Mammary epithelial cell (primary cell): ENCODE measurements at regions of chr1 and their contacts with region 1.

Region 1: GRCh38 chr1:109532365-109533136 is 7.1 kb upstream of the GPR61 start:
- DNase-seq: peak; percentile 37
- H3K4me3 ChIP-seq: peak overlapping the region in 1 of 3 experiments; percentile 28
- H3K27ac ChIP-seq: no peak overlapping the region
- H3K4me1 ChIP-seq: peaks cover 12% of the 10 kb centered on the region
- H3K27me3 ChIP-seq: no peaks in the 10 kb centered on the region
- CTCF ChIP-seq: peak; percentile 92 to 99

Region 2: GRCh38 chr1:108512239-108512981 is 1020.1 kb before region 1 on chr1:
- CTCF ChIA-PET with region 1: no interaction called
- dilution Hi-C with region 1: no loop called
- in situ Hi-C with region 1: no loop called
- intact Hi-C with region 1: loop called (anchors 10 kb)
- DNase-seq: no peak
- H3K4me3 ChIP-seq: no peak overlapping the region
- H3K27ac ChIP-seq: no peak overlapping the region
- H3K4me1 ChIP-seq: no peaks in the 10 kb centered on the region
- H3K27me3 ChIP-seq: no peaks in the 10 kb centered on the region
- CTCF ChIP-seq: peak; percentile 68 to 81

Region 3: DNA sequence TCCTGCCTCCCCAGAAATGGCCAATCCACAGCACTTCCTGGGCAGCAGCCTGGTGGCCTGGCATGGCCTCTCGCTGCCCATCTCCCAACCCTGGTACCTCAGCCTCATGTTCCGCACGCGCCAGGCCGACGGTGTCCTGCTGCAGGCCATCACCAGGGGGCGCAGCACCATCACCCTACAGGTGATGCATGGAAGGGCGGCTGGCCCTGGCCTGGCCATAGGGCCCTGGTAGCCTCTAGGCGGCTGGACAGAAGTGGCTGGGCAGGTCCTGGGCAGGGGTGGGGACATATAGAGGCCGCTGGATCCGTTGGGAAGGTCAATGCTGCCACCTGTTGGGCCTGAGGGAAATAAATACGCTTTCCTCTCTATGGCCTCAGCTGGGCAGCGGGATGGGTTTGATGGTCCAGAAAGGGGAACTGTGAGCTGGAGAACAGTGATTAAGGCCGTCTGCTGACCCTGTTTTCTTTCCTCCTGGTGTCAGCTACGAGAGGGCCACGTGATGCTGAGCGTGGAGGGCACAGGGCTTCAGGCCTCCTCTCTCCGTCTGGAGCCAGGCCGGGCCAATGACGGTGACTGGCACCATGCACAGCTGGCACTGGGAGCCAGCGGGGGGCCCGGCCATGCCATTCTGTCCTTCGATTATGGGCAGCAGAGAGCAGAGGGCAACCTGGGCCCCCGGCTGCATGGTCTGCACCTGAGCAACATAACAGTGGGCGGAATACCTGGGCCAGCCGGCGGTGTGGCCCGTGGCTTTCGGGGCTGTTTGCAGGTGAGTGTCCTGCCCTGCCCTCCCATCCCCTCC is 268.8 kb before region 1 on chr1:
- CTCF ChIA-PET with region 1: no interaction called
- dilution Hi-C with region 1: no loop called
- in situ Hi-C with region 1: no loop called
- intact Hi-C with region 1: loop called (anchors 1 kb)
- DNase-seq: no peak
- H3K4me3 ChIP-seq: no peak overlapping the region
- H3K27ac ChIP-seq: peak overlapping the region; percentile 40
- H3K4me1 ChIP-seq: peaks cover 32% of the 10 kb centered on the region
- H3K27me3 ChIP-seq: no peaks in the 10 kb centered on the region
- CTCF ChIP-seq: peak; percentile 100

Region 4: GRCh38 chr1:109397538-109398342 is 134.8 kb before region 1 on chr1 and contains the start of gene SORT1:
- CTCF ChIA-PET with region 1: no interaction called
- dilution Hi-C with region 1: no loop called
- in situ Hi-C with region 1: no loop called
- intact Hi-C with region 1: loop called (anchors 1 kb)
- DNase-seq: peak; percentile 77
- H3K4me3 ChIP-seq: peak within 1 kb of the TSS; percentile 54 to 73 (median 65)
- H3K27ac ChIP-seq: peak within 1 kb of the TSS; percentile 16
- H3K4me1 ChIP-seq: peaks cover 20% of the 10 kb centered on the region
- H3K27me3 ChIP-seq: no peaks in the 10 kb centered on the region
- CTCF ChIP-seq: no peak
- total RNA-seq, gene SORT1: 24.6 to 41.8 TPM

Region 5: DNA sequence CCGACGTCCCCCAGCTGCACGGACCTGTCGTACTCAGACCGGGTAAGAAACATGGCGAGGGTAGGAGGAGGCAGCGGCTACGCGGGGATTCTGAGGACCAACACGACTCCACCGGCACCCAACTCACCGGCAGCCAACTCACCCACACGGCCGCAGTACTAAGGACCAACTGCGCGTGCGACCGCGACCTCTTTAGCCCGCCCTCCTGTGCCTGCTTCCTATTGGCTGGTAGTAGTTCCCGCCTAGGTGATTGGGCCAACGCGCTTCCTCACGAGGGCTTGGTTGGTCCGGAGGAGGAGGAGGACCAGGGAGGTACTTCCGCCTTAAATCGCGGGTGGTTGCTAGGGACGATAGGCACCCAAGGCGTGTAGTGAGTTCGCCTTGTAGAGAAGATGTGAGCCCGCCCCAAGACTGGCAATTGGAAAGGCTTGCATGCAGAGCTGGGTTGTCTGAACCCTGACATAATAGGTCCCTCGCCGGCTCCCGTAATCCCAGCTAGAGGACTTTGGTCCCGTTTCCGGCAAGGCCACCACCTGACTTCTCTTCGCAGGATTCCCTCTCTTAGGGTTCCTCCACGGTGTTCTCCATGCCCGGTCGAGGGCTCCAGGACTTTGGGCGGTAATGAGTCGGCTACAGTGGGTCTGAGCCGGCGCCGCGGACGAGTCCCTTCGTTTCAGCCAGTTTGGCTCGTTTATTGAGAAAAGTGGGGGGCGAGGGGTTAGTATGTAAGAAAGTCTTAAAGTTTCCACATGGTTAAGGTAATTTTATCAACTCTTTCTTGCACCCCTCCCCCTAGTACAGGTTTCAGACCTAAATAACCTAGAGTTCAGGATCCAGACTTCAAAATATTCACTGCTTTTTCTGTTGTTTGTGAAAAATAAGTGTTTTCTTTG is 106.0 kb before region 1 on chr1 and contains the start of gene PSMA5:
- CTCF ChIA-PET with region 1: interaction called, 4 read pairs
- dilution Hi-C with region 1: no loop called
- in situ Hi-C with region 1: no loop called
- intact Hi-C with region 1: loop called (anchors 1 kb)
- DNase-seq: peak; percentile 100
- H3K4me3 ChIP-seq: peak within 1 kb of the TSS; percentile 77 to 98 (median 94)
- H3K27ac ChIP-seq: peak within 1 kb of the TSS; percentile 77
- H3K4me1 ChIP-seq: peaks cover 8% of the 10 kb centered on the region
- H3K27me3 ChIP-seq: no peaks in the 10 kb centered on the region
- CTCF ChIP-seq: no peak
- total RNA-seq, gene PSMA5: 46.0 to 110 TPM

Region 6: DNA sequence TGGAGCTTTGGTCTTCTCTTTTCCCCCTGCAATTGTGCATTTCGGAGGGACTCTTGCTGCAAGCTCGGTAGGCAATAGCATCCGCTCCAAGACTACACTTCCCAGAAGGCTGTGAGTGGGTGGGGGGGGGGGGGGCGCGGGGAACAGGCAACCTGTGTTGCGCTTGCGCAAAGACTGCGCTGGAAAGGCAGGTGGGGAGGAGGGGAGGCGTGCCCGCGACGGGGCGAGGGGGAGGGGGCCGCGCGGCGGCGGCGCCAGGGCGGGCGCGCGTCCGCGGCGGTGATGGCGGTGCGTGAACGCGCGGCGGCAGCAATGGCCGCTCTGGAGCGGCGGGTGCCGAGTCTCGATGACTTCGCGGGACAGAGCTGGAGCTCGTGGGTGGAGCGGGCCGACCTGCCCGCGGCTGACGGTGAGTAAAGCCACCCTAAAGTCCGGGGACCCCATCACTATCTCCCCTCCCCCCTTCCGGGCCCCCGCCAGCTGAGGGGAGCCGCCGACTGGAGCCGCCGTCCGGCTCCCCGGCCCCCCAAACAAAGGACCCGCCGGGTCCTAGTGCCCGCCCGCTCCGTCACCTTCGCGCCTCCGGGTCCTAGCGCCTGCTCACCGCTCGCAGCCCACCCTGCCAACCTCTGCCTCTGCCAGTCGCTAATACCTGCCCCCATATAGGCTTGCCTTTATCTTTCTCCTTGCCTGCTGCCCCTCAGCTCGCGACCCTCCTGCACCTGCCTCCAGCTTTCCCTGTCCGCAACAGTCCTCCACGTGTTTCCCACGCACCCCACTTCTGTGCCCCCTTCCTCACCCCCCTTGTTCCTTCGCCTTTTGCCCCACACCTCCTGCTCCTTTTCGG is 48.7 kb before region 1 on chr1 and contains the start of gene ATXN7L2:
- CTCF ChIA-PET with region 1: interaction called, 4 read pairs
- dilution Hi-C with region 1: loop called (anchors 5 kb)
- in situ Hi-C with region 1: no loop called
- intact Hi-C with region 1: no loop called
- DNase-seq: peak; percentile 79
- H3K4me3 ChIP-seq: peak within 1 kb of the TSS; percentile 41 to 93 (median 68)
- H3K27ac ChIP-seq: peak within 1 kb of the TSS; percentile 42
- H3K4me1 ChIP-seq: peaks cover 13% of the 10 kb centered on the region
- H3K27me3 ChIP-seq: no peaks in the 10 kb centered on the region
- CTCF ChIP-seq: no peak
- total RNA-seq, gene ATXN7L2: 0.83 to 4.3 TPM

Region 7: DNA sequence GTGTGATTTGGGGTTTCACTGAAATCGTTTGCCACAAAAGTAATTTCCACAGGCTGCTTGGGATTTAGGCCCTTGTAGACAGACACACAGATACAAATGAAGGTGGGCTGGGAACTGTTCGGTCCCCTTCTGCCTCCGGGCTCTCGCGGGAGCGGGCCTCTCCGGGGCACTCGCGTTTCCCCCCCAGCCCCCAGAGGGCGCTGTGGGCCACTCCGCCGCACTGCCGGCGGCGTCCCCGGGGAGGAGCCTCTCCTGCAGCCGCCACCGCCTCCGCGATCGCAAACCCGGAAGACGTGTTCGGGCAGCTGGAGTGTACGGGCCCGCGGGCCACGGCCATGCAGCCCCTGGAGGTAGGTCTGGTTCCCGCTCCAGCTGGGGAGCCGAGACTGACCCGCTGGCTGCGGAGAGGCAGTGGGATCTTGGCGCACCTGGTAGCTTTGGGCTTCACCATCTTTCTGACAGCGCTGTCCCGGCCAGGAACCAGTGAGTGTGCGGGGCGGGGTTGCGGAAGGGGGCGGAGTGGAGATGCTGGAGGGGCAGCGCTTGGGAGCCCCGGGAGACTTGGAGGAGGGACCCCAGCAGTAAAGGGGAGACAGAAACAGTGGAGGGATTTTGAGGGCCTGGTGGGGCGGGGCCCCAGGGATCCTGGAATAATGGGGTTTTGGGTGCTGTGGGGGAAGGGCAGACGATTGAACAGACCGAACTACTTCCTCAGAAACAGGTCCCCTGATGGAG is 38.6 kb before region 1 on chr1 and contains the start of gene CYB561D1:
- CTCF ChIA-PET with region 1: interaction called, 17 read pairs
- dilution Hi-C with region 1: loop called (anchors 5 kb)
- in situ Hi-C with region 1: loop called (anchors 5 kb)
- intact Hi-C with region 1: loop called (anchors 1 kb)
- DNase-seq: peak; percentile 80
- H3K4me3 ChIP-seq: peak within 1 kb of the TSS; percentile 93 to 98 (median 94)
- H3K27ac ChIP-seq: no peak within 1 kb of the TSS
- H3K4me1 ChIP-seq: peaks cover 4% of the 10 kb centered on the region
- H3K27me3 ChIP-seq: no peaks in the 10 kb centered on the region
- CTCF ChIP-seq: peak; percentile 58 to 95
- total RNA-seq, gene CYB561D1: 7.3 to 7.7 TPM